AG04450 (cell line): ENCODE measurements at regions of chr20 and their contacts with region 1.

Region 1: DNA sequence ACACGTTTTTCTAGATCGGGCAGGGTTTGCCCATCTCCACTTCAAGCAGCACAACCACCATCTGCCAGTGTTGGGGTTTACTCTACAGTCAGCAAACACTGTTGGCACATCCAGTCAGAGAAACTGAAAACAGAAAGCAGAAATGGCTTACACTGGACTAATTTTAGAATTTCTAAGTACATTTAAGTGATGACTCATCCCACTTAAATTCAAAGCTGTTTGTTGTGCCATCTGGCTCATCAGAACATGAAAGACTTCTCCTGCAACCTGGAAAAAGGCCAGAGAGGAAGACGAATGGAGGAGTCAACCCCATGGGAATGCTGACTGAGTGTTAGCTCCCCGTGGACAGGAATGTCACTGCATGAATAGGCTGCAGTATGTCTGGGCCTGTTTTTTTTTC is 21.8 kb downstream of the FAM209B start:
- DNase-seq: peak; percentile 81
- H3K4me3 ChIP-seq: no peak overlapping the region
- H3K27ac ChIP-seq: no peak overlapping the region
- H3K27me3 ChIP-seq: peaks cover 4% of the 10 kb centered on the region
- CTCF ChIP-seq: 0 out of 2 replicates have a peak, but pooled peaks have one; percentile 8

Region 2: GRCh38 chr20:55961376-55962330 is 593.2 kb before region 1 on chr20:
- CTCF ChIA-PET with region 1: no interaction called
- POLR2A ChIA-PET with region 1: no interaction called
- DNase-seq: no peak
- H3K4me3 ChIP-seq: no peak overlapping the region
- H3K27ac ChIP-seq: no peak overlapping the region
- H3K27me3 ChIP-seq: no peaks in the 10 kb centered on the region
- CTCF ChIP-seq: no peak

Region 3: DNA sequence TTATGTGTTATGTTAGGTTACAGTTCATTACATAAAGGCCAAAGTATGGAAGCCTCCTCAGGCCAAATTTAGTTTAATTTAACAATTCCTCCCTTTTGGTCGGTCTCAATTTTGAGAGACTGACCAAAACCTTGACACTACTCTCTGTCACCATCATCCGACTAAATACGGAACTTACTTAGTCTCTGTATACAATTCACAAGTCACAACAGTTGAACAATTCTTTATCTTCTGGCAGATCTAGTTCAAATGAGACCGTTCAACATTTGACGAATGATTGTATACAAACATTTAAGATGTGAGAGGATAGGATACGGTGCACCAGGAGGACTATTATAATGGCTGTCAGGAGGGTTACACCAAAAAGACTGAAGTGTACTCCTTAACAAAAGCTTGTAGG is 13.5 kb after region 1 on chr20:
- CTCF ChIA-PET with region 1: interaction called, 12 read pairs
- POLR2A ChIA-PET with region 1: no interaction called
- DNase-seq: no peak
- H3K4me3 ChIP-seq: no peak overlapping the region
- H3K27ac ChIP-seq: no peak overlapping the region
- H3K27me3 ChIP-seq: no peaks in the 10 kb centered on the region
- CTCF ChIP-seq: no peak

Region 4: DNA sequence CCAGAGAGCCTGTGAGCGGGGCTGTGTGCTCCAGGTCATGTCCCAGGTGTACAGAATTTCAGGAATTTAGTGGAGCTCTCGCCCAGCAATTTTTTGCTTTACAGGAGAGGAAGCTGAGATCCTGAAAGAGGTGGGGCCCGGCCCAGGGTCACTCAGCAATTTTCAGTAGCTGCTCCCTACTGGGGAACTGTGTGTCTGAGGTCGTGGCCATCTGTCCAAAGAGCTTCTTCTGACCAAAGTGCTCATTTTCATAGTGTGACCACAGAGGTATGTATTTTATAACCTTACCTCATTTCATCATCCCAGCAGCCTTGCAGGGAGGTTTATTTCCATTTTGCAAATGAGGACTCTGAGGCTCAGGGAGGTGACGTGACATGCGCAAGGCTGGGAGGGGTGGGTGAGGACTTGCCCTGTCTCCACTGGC is 24.4 kb after region 1 on chr20:
- CTCF ChIA-PET with region 1: interaction called, 18 read pairs
- POLR2A ChIA-PET with region 1: interaction called, 3 read pairs
- DNase-seq: no peak
- H3K4me3 ChIP-seq: no peak overlapping the region
- H3K27ac ChIP-seq: no peak overlapping the region
- H3K27me3 ChIP-seq: peaks cover 8% of the 10 kb centered on the region
- CTCF ChIP-seq: no peak

Region 5: GRCh38 chr20:56595746-56596478 is 41.0 kb after region 1 on chr20:
- CTCF ChIA-PET with region 1: no interaction called
- POLR2A ChIA-PET with region 1: no interaction called
- DNase-seq: no peak
- H3K4me3 ChIP-seq: no peak overlapping the region
- H3K27ac ChIP-seq: no peak overlapping the region
- H3K27me3 ChIP-seq: no peaks in the 10 kb centered on the region
- CTCF ChIP-seq: no peak

Region 6: GRCh38 chr20:56945059-56945458 is 390.2 kb after region 1 on chr20:
- CTCF ChIA-PET with region 1: interaction called, 10 read pairs
- POLR2A ChIA-PET with region 1: no interaction called
- DNase-seq: no peak
- H3K4me3 ChIP-seq: no peak overlapping the region
- H3K27ac ChIP-seq: no peak overlapping the region
- H3K27me3 ChIP-seq: no peaks in the 10 kb centered on the region
- CTCF ChIP-seq: no peak

Region 7: DNA sequence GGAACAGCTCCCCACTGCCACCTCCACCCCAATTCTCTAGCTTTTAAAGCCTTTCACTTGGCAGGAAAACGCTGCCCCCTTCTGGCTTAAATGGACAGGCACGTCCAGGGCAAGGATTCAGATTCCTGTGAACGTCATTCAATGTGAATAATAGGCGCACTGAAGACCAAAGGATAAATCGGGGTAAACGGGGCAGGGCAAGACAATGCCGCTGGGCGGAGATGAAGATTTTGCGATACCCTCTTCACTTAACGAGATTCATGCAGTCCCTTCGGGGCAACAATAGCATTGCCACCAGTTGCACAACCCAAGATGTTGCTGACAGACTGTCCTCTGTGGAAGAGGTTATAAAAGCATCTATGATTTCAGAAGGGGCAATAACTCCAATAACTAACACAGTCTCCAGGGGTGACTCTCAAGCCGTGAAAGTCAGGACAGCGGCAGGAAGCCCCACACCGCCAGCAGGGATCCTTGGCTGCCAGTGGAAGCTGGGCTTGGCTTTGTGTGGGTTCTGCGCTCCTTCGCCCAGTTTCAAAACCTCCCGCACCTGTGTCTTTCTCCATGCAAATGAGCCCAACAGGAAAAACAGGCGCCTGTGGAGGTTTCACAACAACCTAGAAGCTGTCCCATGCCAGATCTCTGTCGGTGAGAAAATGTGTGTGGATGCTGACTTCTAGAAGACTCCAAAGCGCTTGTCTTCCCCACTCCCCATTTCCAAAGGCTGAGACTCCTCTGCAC is 419.8 kb after region 1 on chr20:
- CTCF ChIA-PET with region 1: interaction called, 54 read pairs
- POLR2A ChIA-PET with region 1: no interaction called
- DNase-seq: no peak
- H3K4me3 ChIP-seq: no peak overlapping the region
- H3K27ac ChIP-seq: no peak overlapping the region
- H3K27me3 ChIP-seq: peaks cover 5% of the 10 kb centered on the region
- CTCF ChIP-seq: peak; percentile 68

Region 8: GRCh38 chr20:56995576-56996075 is 440.8 kb after region 1 on chr20:
- CTCF ChIA-PET with region 1: interaction called, 19 read pairs
- POLR2A ChIA-PET with region 1: no interaction called
- DNase-seq: no peak
- H3K4me3 ChIP-seq: no peak overlapping the region
- H3K27ac ChIP-seq: no peak overlapping the region
- H3K27me3 ChIP-seq: no peaks in the 10 kb centered on the region
- CTCF ChIP-seq: peak; percentile 43

Region 9: DNA sequence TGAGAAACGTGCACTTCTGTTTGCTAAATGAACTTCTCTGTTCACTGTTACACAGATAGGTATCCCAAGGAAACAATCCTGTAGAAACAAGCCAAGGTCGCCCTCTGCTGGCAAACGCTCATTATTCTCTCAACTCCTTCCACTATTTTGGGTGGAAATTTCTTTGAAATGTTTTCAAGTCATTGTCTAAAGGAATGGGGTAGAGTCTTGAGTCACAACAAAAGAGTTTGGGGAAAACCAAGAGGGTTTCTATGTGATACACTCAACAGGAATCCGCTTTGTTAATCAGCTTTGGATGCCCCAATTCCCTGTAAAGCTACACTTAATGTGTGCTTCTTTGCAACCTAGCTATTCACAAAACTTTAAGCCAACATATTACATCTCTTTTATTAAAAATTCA is 791.6 kb after region 1 on chr20:
- CTCF ChIA-PET with region 1: interaction called, 43 read pairs
- POLR2A ChIA-PET with region 1: no interaction called
- DNase-seq: peak; percentile 34
- H3K4me3 ChIP-seq: no peak overlapping the region
- H3K27ac ChIP-seq: no peak overlapping the region
- H3K27me3 ChIP-seq: no peaks in the 10 kb centered on the region
- CTCF ChIP-seq: peak; percentile 79